ENCODE measurements at regions of chr18 and their contacts with region 1.

Region 1: DNA sequence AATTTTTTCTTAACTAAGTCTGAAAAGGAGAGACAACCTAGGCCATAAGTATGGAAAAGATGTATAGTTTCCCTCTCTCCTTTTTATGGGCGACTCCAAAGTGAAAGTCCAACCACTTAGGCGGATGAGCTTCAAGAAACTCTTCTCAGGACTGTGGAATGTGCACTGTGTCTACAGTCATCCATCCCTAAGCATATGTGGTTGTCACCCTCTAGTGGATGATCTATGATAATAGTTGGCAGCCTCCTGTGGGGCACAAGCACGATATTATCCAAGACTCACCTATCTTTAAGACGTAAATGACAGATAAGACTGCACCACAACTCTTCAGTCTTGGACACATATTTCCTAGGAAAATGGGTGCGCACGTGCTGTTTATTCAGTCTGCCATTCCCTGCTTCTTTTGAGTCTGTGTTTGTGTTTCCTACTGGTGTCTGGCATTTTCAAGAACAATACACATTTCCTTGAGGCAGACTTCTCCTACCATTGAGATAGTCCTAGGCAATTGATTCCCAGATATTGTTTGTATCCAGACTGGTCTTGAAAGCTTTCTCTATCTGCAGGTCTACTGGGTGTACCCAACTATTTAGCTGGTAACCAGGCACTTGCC is 145.5 kb upstream of the CTAGE1 start:
- DNase-seq: peak; percentile 77
- H3K4me3 ChIP-seq: no peak overlapping the region
- H3K27ac ChIP-seq: no peak overlapping the region
- H3K4me1 ChIP-seq: peaks cover 7% of the 10 kb centered on the region
- H3K27me3 ChIP-seq: peaks cover 91% of the 10 kb centered on the region
- CTCF ChIP-seq: peak; percentile 77

Region 2: DNA sequence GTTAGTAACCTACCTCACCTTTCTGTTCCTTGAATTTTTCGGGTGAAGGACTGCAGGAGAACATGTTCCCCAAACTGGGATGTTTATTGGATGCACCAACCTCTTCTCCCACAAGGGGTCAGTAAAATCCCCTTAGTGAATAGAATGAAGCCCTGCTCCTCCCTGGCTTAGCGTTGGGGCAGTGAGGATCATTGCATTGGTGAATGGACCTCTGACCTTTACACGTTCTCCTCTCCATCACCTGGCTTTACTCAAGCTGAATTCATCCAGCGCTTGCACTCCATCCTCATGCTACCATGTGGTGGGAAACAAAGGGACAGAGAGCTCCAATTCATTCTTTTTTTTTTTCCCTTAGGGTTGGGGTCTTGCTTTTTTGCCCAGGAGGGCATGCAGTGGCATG is 665.4 kb before region 1 on chr18:
- CTCF ChIA-PET with region 1: no interaction called
- POLR2A ChIA-PET with region 1: no interaction called
- intact Hi-C with region 1: loop called (anchors 5 kb)
- DNase-seq: peak; percentile 55
- H3K4me3 ChIP-seq: no peak overlapping the region
- H3K27ac ChIP-seq: no peak overlapping the region
- H3K4me1 ChIP-seq: no peaks in the 10 kb centered on the region
- H3K27me3 ChIP-seq: no peaks in the 10 kb centered on the region
- CTCF ChIP-seq: peak; percentile 81

Region 3: GRCh38 chr18:21914739-21915319 is 648.4 kb before region 1 on chr18:
- CTCF ChIA-PET with region 1: no interaction called
- POLR2A ChIA-PET with region 1: no interaction called
- intact Hi-C with region 1: loop called (anchors 5 kb)
- DNase-seq: peak; percentile 74
- H3K4me3 ChIP-seq: no peak overlapping the region
- H3K27ac ChIP-seq: no peak overlapping the region
- H3K4me1 ChIP-seq: no peaks in the 10 kb centered on the region
- H3K27me3 ChIP-seq: peaks cover 19% of the 10 kb centered on the region
- CTCF ChIP-seq: peak; percentile 72

Region 4: DNA sequence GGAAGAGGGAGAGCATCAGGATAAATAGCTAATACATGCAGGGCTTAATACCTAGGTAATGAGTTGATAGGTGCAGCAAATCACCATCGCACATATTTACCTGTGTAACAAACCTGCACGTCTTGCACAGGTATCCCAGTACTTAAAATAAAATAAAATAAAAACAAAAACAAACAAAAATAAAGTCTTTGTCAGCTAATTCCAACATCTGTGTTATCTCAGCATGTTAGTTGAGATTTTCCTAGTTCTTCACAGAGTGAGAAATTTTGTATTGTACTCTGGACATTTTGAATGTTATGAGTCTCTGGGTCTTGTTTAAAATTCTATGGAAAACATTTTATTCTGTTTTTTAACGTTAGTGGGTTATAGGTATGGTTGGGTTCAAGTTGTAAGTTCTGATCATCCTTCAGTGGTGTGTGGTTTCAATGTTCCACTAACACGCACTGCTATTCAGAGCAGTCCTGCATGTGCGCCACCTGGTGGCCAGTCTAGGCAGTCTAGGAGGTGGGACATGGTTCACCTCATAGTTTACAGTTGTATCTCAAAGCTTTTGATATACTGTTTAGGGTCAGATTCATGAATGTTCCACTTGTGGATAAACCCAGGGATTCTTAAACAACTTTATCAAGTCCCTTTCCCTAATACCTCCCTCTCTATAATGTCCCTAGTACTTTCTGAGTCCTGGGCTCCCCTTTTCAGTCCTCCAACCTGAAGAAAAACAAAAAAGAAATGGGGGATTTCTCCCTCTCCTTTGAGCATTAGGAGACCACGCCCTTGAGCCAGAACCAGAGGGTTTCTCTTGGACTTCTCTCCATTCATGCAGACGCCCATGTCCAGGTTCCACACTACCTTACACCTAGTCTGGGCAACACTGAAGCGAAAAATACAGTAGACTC is 607.2 kb before region 1 on chr18:
- CTCF ChIA-PET with region 1: no interaction called
- POLR2A ChIA-PET with region 1: no interaction called
- intact Hi-C with region 1: loop called (anchors 10 kb)
- DNase-seq: peak; percentile 77
- H3K4me3 ChIP-seq: no peak overlapping the region
- H3K27ac ChIP-seq: no peak overlapping the region
- H3K4me1 ChIP-seq: no peaks in the 10 kb centered on the region
- H3K27me3 ChIP-seq: peaks cover 21% of the 10 kb centered on the region
- CTCF ChIP-seq: peak; percentile 98

Region 5: GRCh38 chr18:21997207-21998143 is 565.7 kb before region 1 on chr18:
- CTCF ChIA-PET with region 1: interaction called, 5 read pairs
- POLR2A ChIA-PET with region 1: interaction called, 3 read pairs
- intact Hi-C with region 1: loop called (anchors 5 kb)
- DNase-seq: peak; percentile 71
- H3K4me3 ChIP-seq: no peak overlapping the region
- H3K27ac ChIP-seq: no peak overlapping the region
- H3K4me1 ChIP-seq: peaks cover 4% of the 10 kb centered on the region
- H3K27me3 ChIP-seq: no peaks in the 10 kb centered on the region
- CTCF ChIP-seq: peak; percentile 93

Region 6: DNA sequence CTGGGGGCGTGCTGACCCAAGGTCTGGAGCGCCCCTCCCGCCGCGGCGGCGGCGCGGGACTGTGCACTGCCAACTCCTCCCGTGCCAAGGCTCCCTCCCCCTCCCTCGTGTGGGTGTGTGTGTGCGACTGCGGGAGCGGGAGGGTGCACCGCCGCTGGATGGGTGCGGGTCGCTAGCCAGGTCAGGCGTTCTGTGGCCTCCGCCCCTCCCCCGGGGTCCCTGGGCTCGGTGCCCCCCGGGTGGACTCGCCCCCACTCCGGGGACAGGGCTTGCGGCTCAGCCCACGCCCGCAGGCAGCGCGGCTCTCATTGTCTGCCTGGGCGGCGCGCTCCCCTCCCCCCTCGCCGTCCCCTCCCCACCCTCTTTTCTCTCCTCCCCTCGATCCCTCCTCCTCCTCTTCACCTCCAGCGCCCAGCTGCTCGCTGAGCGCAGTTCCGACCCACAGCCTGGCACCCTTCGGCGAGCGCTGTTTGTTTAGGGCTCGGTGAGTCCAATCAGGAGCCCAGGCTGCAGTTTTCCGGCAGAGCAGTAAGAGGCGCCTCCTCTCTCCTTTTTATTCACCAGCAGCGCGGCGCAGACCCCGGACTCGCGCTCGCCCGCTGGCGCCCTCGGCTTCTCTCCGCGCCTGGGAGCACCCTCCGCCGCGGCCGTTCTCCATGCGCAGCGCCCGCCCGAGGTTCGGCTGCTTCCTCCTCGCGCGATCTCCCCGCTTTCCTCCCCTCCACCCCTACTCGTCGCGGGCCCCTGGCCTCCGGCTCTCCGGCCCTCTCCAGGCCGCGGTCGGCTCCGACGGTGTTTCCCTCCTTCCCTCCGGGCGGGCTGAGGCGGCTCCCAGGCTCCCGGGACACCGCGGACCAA is 394.0 kb before region 1 on chr18 and contains the start of gene GATA6:
- CTCF ChIA-PET with region 1: interaction called, 3 read pairs
- POLR2A ChIA-PET with region 1: no interaction called
- intact Hi-C with region 1: loop called (anchors 2 kb)
- DNase-seq: peak; percentile 90
- H3K4me3 ChIP-seq: peak within 1 kb of the TSS; percentile 56
- H3K27ac ChIP-seq: no peak within 1 kb of the TSS
- H3K4me1 ChIP-seq: peaks cover 33% of the 10 kb centered on the region
- H3K27me3 ChIP-seq: peaks cover 97% of the 10 kb centered on the region
- CTCF ChIP-seq: peak; percentile 64
- total RNA-seq, gene GATA6: 0.20 and 0.21 TPM in 2 replicates

Region 7: GRCh38 chr18:22349966-22350365 is 213.2 kb before region 1 on chr18:
- CTCF ChIA-PET with region 1: no interaction called
- POLR2A ChIA-PET with region 1: no interaction called
- intact Hi-C with region 1: loop called (anchors 10 kb)
- DNase-seq: no peak
- H3K4me3 ChIP-seq: no peak overlapping the region
- H3K27ac ChIP-seq: no peak overlapping the region
- H3K4me1 ChIP-seq: no peaks in the 10 kb centered on the region
- H3K27me3 ChIP-seq: peaks cover 96% of the 10 kb centered on the region
- CTCF ChIP-seq: no peak